ENCODE measurements at regions of chr9 and their contacts with region 1.

Region 1: DNA sequence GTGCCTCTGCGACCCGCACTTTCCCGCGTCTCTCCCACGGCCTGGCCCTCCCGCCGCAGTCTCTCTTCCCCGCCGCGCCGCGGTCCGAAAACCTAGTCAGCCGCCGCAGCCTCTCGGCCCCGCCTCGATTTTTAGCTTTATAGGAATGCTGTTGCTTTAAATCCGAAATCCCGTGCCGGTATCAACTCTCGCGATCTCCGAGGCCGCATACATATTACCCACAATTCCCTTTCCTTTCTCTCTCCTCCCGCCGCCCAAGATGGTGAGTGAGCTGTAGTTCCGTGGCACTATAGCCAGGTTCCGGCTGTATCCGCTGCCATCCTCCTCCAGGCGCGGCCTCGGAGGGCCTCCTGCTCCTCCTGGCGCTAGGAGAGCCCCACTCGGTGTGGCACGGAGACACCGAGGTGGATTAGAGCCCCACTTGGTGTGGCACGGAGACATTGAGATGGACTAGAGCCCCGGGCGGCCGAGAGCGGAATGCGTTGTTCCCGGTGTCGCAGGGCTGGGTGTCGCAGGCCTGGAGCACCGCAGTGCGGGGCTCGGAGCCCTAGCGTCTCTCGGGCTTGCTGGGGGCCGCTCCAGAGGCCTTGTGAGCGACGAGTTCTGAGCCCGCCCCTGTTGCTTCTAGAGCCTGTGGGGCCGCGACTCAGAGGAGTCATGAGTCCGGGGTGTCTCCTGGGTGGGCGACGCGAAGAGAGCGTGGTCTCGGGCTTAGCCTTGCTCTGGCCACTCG is at the starts of genes MED22 and RPL7A:
- H3K4me3 Mint-ChIP-seq: peak within 1 kb of the TSS; percentile 85
- H3K27ac Mint-ChIP-seq: peak within 1 kb of the TSS; percentile 96
- H3K4me1 Mint-ChIP-seq: peaks cover 64% of the 10 kb centered on the region
- H3K27me3 Mint-ChIP-seq: no peaks in the 10 kb centered on the region

Region 2: DNA sequence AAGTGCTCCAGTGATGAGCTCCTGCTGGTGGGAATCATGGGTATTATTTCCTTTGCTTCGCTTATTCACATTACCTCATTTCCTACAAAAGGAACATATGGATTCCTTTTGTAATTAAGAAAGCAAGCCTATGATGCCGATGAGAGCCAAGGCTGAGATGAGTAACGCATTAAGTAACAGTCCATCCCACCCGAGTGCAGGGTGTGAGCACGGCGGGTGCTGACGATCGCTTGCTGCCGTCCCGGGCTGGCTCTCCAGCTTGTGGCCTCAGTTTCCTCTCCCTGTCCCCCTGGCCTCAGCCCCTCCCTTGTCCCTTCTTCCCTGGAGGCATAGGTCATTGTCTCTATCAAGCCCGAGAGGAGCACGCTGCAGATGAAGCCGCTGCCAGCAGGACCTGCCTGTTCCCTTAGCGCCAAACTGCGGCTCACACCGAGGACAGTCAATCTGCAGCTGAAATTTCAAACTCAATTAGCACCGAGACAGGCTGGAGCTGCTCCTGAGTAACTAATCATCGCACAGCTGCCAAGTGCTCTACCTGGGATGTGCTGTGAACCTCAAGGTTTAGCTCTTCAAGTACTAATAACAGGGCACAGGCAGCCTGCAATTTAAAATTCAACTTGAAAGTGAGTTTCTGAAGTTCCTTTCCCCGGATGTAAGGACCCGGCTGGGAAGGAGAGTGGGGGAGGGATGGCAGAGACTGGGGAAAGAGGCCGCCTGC is 1493.1 kb before region 1 on chr9:
- intact Hi-C with region 1: no loop called
- H3K4me3 Mint-ChIP-seq: no peak overlapping the region
- H3K27ac Mint-ChIP-seq: no peak overlapping the region
- H3K4me1 Mint-ChIP-seq: peaks cover 17% of the 10 kb centered on the region
- H3K27me3 Mint-ChIP-seq: peaks cover 5% of the 10 kb centered on the region

Region 3: GRCh38 chr9:133275105-133276000 is 72.8 kb before region 1 on chr9 and contains the start of gene ABO:
- intact Hi-C with region 1: no loop called
- H3K4me3 Mint-ChIP-seq: peak within 1 kb of the TSS; percentile 64
- H3K27ac Mint-ChIP-seq: no peak within 1 kb of the TSS
- H3K4me1 Mint-ChIP-seq: peaks cover 25% of the 10 kb centered on the region
- H3K27me3 Mint-ChIP-seq: peaks cover 31% of the 10 kb centered on the region

Region 4: GRCh38 chr9:133306242-133307204 is 41.6 kb before region 1 on chr9:
- intact Hi-C with region 1: no loop called
- H3K4me3 Mint-ChIP-seq: no peak overlapping the region
- H3K27ac Mint-ChIP-seq: no peak overlapping the region
- H3K4me1 Mint-ChIP-seq: no peaks in the 10 kb centered on the region
- H3K27me3 Mint-ChIP-seq: peaks cover 3% of the 10 kb centered on the region

Region 5: GRCh38 chr9:133335878-133336811 is 12.0 kb before region 1 on chr9 and contains the start of gene SURF6:
- intact Hi-C with region 1: loop called (anchors 1 kb)
- H3K4me3 Mint-ChIP-seq: peak within 1 kb of the TSS; percentile 97
- H3K27ac Mint-ChIP-seq: peak within 1 kb of the TSS; percentile 92
- H3K4me1 Mint-ChIP-seq: peaks cover 91% of the 10 kb centered on the region
- H3K27me3 Mint-ChIP-seq: no peaks in the 10 kb centered on the region

Measured in dendritic cell treated with granulocyte-macrophage colony-stimulating factor and Interleukin-4, amounts not matched to agents 40 ng/mL and 50 ng/mL, for 4 days (primary cell).